Panc1 (cell line): ENCODE measurements at regions of chr9 and their contacts with region 1.

Region 1: DNA sequence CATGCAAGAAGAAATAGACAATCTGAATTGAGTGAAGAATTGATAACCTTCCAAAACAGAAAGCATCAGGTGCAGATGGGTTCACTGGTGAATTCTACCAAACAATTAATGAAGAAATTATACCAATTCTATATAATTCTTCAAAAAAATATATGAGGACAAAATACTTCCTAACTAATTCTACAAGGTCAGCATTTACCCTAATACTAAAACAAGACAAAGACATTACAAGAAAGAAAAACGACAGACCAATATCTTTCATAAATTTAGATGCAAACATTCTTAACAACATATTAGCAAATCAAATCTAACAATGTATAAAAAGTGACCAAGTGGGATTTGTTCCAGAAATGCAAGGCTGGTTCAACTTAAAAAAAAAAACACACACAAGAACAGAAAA is 183.9 kb downstream of the BARX1 start:
- DNase-seq: no peak
- ATAC-seq: no peak
- H3K4me3 ChIP-seq: no peak overlapping the region
- H3K27ac ChIP-seq: no peak overlapping the region
- H3K4me1 ChIP-seq: no peaks in the 10 kb centered on the region
- H3K27me3 ChIP-seq: no peaks in the 10 kb centered on the region
- CTCF ChIP-seq: no peak

Region 2: GRCh38 chr9:94014065-94014654 is 242.9 kb after region 1 on chr9:
- CTCF ChIA-PET with region 1: no interaction called
- POLR2A ChIA-PET with region 1: interaction called, 11 read pairs
- in situ Hi-C with region 1: no loop called
- intact Hi-C with region 1: no loop called
- DNase-seq: no peak
- ATAC-seq: peak; percentile 70
- H3K4me3 ChIP-seq: no peak overlapping the region
- H3K27ac ChIP-seq: no peak overlapping the region
- H3K4me1 ChIP-seq: no peaks in the 10 kb centered on the region
- H3K27me3 ChIP-seq: no peaks in the 10 kb centered on the region
- CTCF ChIP-seq: peak; percentile 64